ENCODE measurements at regions of chr10 and their contacts with region 1.

Region 1: GRCh38 chr10:79195091-79195923 is 126.5 kb downstream of the ZMIZ1 start:
- H3K4me3 ChIP-seq: no peak overlapping the region
- H3K27ac ChIP-seq: no peak overlapping the region
- H3K4me1 ChIP-seq: no peaks in the 10 kb centered on the region
- CTCF ChIP-seq: peak; percentile 94

Region 2: DNA sequence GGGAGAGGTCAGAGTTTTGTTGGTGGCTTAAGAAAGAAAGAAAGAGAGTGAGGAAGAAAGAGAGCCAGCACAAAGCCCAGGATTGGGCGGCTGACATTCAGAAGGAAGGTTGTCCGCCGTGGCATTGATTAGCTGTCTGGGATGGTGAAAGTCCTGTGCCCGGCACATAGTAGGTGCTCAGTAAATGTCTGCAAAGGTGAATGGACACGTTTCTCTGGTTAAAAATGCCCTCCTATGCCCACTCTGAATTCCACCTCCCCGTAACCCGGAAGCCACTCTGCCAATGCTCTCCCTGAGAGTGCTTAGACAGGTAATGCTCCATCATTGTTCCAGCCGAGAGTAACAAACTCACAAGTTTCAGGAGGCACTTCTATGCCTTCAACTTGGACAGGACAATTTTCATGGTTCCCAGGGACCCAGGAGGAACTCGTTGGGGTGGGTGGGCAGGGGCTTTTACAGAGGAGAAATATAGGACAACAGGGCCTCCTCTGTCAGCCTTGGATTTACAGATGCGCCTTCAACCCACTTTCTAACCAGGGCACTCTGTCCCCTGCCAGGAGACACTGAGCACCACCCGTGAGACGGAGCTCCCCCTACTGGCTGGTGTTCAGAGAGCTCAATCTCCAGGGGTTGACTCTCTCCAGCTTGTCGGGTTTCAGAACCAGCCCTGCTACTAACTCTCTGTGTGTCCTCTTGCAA is 538.0 kb before region 1 on chr10:
- CTCF ChIA-PET with region 1: interaction called, 10 read pairs
- POLR2A ChIA-PET with region 1: no interaction called
- H3K4me3 ChIP-seq: no peak overlapping the region
- H3K27ac ChIP-seq: no peak overlapping the region
- H3K4me1 ChIP-seq: no peaks in the 10 kb centered on the region
- CTCF ChIP-seq: peak; percentile 48

Region 3: GRCh38 chr10:79068562-79069324 is 126.6 kb before region 1 on chr10 and contains the start of gene ZMIZ1:
- CTCF ChIA-PET with region 1: interaction called, 19 read pairs
- POLR2A ChIA-PET with region 1: no interaction called
- H3K4me3 ChIP-seq: peak within 1 kb of the TSS; percentile 60
- H3K27ac ChIP-seq: peak within 1 kb of the TSS; percentile 96
- H3K4me1 ChIP-seq: peaks cover 10% of the 10 kb centered on the region
- CTCF ChIP-seq: peak; percentile 70

Region 4: DNA sequence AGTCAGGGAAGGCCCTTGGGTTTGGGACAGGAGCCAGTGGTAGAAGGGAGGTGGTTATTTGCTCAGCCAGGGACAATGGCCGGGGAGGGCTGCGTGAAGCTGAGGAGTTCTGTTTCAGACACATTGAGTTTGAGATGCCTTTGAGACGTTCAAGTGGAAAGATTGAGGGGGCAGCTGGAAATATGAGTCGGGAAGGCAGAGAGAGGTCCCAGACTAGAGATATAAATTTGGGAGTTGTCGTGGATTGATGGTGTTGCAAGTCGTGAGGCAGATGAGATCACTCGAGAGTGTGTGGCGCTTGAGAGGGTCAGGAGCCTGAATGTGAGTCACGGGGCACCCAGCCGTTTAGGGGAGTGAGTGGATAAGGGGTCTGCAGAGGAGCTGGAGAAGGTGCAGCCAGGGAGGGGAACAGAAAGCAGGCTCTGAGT is 53.2 kb before region 1 on chr10:
- CTCF ChIA-PET with region 1: interaction called, 17 read pairs
- POLR2A ChIA-PET with region 1: no interaction called
- H3K4me3 ChIP-seq: no peak overlapping the region
- H3K27ac ChIP-seq: no peak overlapping the region
- H3K4me1 ChIP-seq: no peaks in the 10 kb centered on the region
- CTCF ChIP-seq: no peak

Region 5: DNA sequence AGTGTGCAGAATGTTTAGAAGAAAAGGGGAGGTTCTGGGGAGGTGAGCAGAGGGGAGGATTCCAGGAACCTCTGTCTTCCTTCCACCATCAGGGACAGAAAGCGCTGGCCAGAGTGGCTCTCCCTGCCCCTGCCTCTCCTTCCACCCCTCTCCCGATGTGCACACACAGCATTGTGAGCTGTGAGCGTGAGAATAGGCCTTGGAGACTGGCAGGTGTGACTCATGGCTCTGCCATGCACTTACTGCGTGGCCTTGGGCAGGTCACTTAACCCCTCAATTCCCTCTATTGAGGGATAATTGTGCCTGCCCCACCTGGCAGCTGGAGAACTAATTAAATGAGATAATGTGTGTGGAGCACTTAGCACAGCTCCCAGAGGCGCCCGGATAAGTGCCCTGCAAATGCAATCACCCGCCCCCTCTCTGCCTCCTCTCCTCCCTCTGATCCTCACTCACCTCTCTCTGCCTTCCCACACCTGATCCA is 11.1 kb before region 1 on chr10:
- CTCF ChIA-PET with region 1: interaction called, 23 read pairs
- POLR2A ChIA-PET with region 1: no interaction called
- H3K4me3 ChIP-seq: no peak overlapping the region
- H3K27ac ChIP-seq: no peak overlapping the region
- H3K4me1 ChIP-seq: 0 out of 2 replicates have a peak, but pooled peaks cover 3% of the 10 kb centered on the region
- CTCF ChIP-seq: no peak

Region 6: GRCh38 chr10:79316671-79317431 is 121.5 kb after region 1 on chr10:
- CTCF ChIA-PET with region 1: no interaction called
- POLR2A ChIA-PET with region 1: no interaction called
- H3K4me3 ChIP-seq: no peak overlapping the region
- H3K27ac ChIP-seq: no peak overlapping the region
- H3K4me1 ChIP-seq: no peaks in the 10 kb centered on the region
- CTCF ChIP-seq: no peak

Measured in HEK293 (cell line).